Left ventricle myocardium superior (tissue), 1 donor: ENCODE measurements at regions of chr11 and their contacts with region 1.

Region 1: DNA sequence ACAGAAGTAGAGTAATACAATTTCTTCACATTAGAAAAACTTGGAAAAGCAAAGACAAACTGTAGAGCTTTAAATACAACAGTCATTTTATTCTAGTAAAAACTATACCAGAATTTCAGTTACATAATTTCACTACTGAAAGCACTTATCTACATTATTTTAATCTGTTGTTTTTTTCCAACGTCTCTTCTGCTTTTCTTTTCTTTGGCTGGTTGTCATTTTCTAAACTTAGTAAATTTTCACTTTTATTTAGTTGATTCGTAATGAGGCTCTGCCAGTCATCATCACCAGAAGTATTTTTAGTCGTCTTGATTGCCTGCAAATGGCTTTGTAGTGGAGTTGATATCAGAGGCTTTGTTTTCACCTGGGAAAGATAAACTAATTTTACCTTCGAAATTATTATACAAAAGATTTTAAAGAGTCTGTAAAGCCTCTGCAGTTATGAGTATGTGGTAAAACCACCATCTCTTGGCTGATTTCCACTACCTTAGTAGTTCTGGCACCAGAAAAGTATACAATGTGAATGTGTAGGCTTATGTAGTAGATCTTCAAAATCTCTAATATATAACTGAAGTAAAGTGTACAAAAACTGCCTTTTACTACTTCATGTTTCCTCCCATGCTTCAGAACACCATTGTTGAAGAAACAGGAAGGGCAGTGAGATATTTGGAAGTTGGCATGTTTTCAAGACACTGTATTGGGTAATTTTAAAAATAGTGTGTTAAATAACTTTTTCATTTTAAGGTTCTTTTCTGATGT is 19.2 kb downstream of the EIF3M start:
- DNase-seq: no peak
- ATAC-seq: no peak

Region 2: DNA sequence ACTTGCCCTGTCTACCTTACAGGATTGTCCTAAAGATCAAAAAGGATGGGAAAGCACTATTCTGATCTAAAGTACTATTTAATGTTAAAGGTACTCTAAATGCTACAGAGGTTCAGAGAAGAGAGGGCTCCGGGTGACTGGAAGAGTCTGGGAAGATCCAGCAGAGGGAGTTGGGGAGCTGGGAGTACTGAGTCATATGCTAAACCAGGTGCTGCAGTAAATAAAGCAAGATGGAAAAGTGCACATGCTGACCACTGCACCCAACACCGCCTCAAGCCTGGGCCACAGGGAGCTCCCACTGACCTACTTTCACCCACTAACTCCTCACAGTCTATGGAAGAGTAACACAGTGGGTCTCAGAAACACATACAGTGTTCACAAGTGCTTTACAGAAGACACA is 216.8 kb before region 1 on chr11:
- intact Hi-C with region 1: loop called (anchors 10 kb)
- DNase-seq: no peak
- ATAC-seq: peak; percentile 73

Region 3: GRCh38 chr11:32583459-32584271 is 19.2 kb before region 1 on chr11 and contains the start of gene EIF3M:
- intact Hi-C with region 1: no loop called
- DNase-seq: peak; percentile 98
- ATAC-seq: peak; percentile 100
- total RNA-seq, gene EIF3M: 198 TPM